ENCODE measurements at regions of chr1 and their contacts with region 1.

Region 1: GRCh38 chr1:108643492-108644335 is 17.2 kb downstream of the HENMT1 start:
- DNase-seq: no peak
- H3K4me3 ChIP-seq: no peak overlapping the region
- H3K27ac ChIP-seq: no peak overlapping the region
- H3K4me1 ChIP-seq: peaks cover 10% of the 10 kb centered on the region
- H3K27me3 ChIP-seq: no peaks in the 10 kb centered on the region
- CTCF ChIP-seq: peak; percentile 83

Region 2: DNA sequence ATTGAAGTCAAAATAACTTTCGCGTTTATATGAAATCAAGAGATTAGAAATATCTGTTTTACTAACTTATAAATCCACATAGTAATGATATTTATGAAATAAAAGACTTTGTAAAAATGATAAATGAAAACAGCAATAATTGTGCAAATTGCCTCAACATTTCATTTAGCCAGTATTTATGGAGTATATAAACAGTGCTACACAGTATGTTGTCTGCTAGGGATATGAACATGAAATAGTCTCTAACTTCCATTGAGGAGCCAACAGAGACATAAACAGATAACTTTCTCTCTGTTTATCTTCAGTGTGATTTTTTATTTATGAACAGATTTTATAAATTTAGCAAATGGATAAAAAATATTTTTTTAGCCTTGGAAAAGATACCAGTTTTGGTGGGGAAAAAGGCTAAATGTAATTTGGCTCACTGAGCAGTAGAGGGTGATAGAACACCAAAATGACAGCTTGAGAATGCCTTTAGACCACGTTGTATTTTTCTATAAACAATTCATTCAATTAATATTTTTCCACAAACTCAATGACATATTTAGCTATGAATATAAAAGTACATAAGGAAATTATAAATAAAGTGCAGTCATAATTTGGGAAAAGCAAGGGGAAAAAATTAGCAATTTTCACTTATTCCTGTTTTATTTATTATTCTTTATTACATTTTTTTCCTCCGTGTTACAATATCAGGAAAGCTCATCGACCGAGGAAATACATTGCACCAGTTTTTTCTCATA is 131.3 kb before region 1 on chr1:
- intact Hi-C with region 1: loop called (anchors 1 kb)
- DNase-seq: no peak
- H3K4me3 ChIP-seq: no peak overlapping the region
- H3K27ac ChIP-seq: no peak overlapping the region
- H3K4me1 ChIP-seq: no peaks in the 10 kb centered on the region
- H3K27me3 ChIP-seq: no peaks in the 10 kb centered on the region
- CTCF ChIP-seq: peak; percentile 91

Region 3: DNA sequence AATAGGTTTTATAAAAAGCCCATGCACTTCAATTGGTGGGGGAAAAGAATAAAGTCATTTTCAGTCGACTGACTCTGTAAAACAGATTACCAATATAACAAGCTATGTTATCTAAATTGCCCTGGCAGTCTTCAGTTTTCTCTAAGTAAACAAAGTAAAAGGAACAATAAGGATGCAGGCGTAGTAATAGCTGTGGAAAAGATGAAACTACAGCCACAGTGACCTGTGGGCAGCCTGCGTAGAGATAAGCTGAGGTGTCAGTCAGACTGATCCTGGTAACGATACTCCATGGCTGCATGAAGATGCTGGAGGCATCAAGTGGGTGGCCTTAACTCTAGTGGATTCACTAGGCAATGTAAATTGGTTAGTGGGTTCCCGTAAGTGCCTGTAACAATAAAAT is 290.2 kb after region 1 on chr1:
- intact Hi-C with region 1: no loop called
- DNase-seq: no peak
- H3K4me3 ChIP-seq: no peak overlapping the region
- H3K27ac ChIP-seq: no peak overlapping the region
- H3K4me1 ChIP-seq: no peaks in the 10 kb centered on the region
- H3K27me3 ChIP-seq: no peaks in the 10 kb centered on the region
- CTCF ChIP-seq: no peak

Measured in left ventricle myocardium inferior (tissue), 1 donor.